B cell (primary cell): ENCODE measurements at regions of chr22 and their contacts with region 1.

Region 1: DNA sequence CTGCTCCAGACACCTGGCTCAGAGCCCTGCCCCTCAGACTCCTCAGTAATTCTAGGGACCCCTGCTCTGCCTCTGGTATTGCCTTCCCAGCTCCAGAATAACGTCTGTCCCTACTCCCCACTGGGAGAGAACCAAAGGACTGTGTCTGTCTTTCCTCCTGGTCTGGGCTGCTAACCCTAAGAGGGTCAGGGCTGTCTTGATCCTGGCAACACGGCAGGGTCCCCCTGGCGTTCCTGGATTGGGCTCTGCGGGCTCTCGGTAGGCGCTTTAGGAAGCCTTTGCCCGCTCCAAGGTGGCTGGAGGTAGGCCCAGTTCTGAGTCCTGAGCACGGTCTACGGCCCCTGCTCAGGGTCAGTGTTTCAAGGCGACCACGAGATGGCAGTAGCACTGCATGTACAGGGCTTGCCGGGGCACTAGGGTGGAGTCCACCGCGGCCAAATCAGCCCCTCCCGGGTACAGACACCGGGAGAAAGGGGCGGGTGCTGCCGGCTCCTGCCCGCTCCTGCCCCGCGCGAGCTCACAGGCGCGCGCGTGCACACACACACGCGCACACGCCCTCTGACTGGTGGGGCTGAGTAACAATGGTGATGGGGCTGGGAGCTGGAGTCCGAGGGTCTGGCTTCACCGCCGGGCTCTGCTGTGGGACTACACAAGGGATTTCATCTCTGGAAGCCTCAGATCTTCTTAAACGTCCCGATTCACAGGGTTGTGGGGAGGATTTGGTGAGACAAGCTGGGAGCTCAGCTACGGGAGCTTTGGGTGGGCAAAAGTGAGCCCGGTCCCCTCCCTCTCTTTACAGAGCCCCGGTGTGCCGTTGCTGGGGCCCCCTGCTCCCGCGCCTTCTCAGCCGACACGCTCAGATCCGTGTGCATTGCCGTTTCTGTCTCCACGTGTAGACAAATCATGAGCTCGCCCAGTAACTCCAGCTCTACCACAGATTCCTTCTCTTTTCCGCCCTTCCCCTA is 30.1 kb upstream of the HMOX1 start:
- DNase-seq: peak; percentile 92
- ATAC-seq: peak; percentile 59
- H3K4me3 ChIP-seq: peak overlapping the region; percentile 53 to 82 (median 56)
- H3K4me3 Mint-ChIP-seq: peak overlapping the region; percentile 90
- H3K27ac ChIP-seq: peak overlapping the region; percentile 92 to 95
- H3K27ac Mint-ChIP-seq: peak overlapping the region; percentile 99
- H3K4me1 ChIP-seq: peaks cover 38 to 51% of the 10 kb centered on the region in 2 donors
- H3K4me1 Mint-ChIP-seq: peaks cover 50% of the 10 kb centered on the region
- H3K27me3 ChIP-seq: no peaks in the 10 kb centered on the region
- H3K27me3 Mint-ChIP-seq: no peaks in the 10 kb centered on the region
- CTCF ChIP-seq: peak; percentile 88

Region 2: DNA sequence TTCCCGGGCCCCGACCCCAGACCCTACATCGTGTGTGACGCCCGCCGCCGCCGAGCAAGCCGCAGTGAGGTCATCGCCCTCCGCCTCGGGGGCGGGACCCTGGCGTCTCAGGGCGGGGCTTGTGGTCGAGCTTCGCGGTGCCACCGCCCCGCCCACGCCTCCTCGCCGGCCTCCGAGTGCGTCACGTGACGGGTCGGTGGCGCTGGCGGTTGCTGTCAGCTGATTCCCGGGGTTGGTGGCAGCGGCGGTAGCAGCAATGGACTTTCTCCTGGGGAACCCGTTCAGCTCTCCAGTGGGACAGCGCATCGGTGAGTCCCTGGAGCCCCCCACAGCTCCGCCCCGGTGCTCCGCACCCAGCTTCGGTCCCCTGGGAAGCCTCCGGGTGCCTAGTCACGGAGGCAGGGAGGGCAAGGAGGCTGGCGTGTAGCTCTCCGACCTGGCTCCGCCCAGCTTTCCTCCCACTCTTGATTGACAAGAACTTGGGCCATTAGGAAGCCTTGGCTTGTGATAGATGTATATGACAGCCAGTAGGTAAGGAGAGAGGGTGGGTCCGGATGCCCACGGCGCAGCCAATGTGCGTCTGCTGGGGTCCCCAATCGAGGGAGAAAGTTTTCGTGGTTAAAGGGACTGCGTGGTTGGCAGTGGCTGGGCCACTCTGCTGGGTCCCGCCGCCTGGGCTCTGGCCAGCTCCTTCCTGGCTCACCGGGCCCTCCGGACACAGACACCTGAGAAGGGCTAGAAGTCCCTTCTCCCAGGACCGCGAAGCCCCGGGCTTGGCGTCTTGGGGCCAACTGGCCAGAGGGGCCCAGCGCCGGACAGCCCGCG is 50.9 kb before region 1 on chr22 and contains the start of gene TOM1:
- CTCF ChIA-PET with region 1: interaction called, 4 read pairs
- POLR2A ChIA-PET with region 1: interaction called, 13 read pairs
- intact Hi-C with region 1: loop called (anchors 1 kb)
- DNase-seq: peak; percentile 100
- ATAC-seq: peak; percentile 90
- H3K4me3 ChIP-seq: peak within 1 kb of the TSS; percentile 61 to 94 (median 73)
- H3K4me3 Mint-ChIP-seq: peak within 1 kb of the TSS; percentile 93
- H3K27ac ChIP-seq: peak within 1 kb of the TSS; percentile 96 to 97
- H3K27ac Mint-ChIP-seq: peak within 1 kb of the TSS; percentile 98
- H3K4me1 ChIP-seq: peaks cover 5 to 22% of the 10 kb centered on the region in 2 donors
- H3K4me1 Mint-ChIP-seq: peaks cover 26% of the 10 kb centered on the region
- H3K27me3 ChIP-seq: no peaks in the 10 kb centered on the region
- H3K27me3 Mint-ChIP-seq: no peaks in the 10 kb centered on the region
- CTCF ChIP-seq: no peak
- total RNA-seq, gene TOM1: 53.2 and 54.2 TPM in 2 replicates

Region 3: GRCh38 chr22:35392357-35392756 is 41.5 kb after region 1 on chr22:
- CTCF ChIA-PET with region 1: interaction called, 17 read pairs
- POLR2A ChIA-PET with region 1: interaction called, 17 read pairs
- intact Hi-C with region 1: no loop called
- DNase-seq: peak; percentile 59
- ATAC-seq: peak; percentile 79
- H3K4me3 ChIP-seq: no peak overlapping the region
- H3K4me3 Mint-ChIP-seq: peak overlapping the region; percentile 54
- H3K27ac ChIP-seq: peak overlapping the region; percentile 34 to 48
- H3K27ac Mint-ChIP-seq: peak overlapping the region; percentile 73
- H3K4me1 ChIP-seq: peaks cover 22 to 32% of the 10 kb centered on the region in 2 donors
- H3K4me1 Mint-ChIP-seq: peaks cover 34% of the 10 kb centered on the region
- H3K27me3 ChIP-seq: no peaks in the 10 kb centered on the region
- H3K27me3 Mint-ChIP-seq: no peaks in the 10 kb centered on the region
- CTCF ChIP-seq: no peak

Region 4: DNA sequence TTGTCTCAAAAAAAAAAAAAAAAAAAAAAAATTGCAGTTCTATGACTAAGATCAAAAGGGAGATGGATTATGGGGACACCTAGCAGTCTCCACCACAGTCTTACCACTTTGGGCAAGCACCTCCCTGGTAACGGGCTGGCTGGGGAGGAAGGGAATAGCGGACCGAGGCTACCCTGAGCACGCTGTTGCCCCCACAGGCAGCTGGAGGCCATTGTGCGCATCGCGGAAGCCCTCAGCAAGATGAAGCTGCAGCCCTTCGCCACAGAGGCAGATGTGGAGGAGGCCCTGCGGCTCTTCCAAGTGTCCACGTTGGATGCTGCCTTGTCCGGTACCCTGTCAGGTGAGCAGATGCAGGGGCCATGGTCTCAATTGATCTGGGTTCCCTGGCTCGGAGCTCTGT is 70.3 kb after region 1 on chr22:
- CTCF ChIA-PET with region 1: interaction called, 311 read pairs
- POLR2A ChIA-PET with region 1: no interaction called
- intact Hi-C with region 1: no loop called
- DNase-seq: no peak
- ATAC-seq: no peak
- H3K4me3 ChIP-seq: no peak overlapping the region
- H3K4me3 Mint-ChIP-seq: no peak overlapping the region
- H3K27ac ChIP-seq: no peak overlapping the region
- H3K27ac Mint-ChIP-seq: no peak overlapping the region
- H3K4me1 ChIP-seq: no peaks in the 10 kb centered on the region
- H3K4me1 Mint-ChIP-seq: no peaks in the 10 kb centered on the region
- H3K27me3 ChIP-seq: no peaks in the 10 kb centered on the region
- H3K27me3 Mint-ChIP-seq: no peaks in the 10 kb centered on the region
- CTCF ChIP-seq: no peak

Region 5: DNA sequence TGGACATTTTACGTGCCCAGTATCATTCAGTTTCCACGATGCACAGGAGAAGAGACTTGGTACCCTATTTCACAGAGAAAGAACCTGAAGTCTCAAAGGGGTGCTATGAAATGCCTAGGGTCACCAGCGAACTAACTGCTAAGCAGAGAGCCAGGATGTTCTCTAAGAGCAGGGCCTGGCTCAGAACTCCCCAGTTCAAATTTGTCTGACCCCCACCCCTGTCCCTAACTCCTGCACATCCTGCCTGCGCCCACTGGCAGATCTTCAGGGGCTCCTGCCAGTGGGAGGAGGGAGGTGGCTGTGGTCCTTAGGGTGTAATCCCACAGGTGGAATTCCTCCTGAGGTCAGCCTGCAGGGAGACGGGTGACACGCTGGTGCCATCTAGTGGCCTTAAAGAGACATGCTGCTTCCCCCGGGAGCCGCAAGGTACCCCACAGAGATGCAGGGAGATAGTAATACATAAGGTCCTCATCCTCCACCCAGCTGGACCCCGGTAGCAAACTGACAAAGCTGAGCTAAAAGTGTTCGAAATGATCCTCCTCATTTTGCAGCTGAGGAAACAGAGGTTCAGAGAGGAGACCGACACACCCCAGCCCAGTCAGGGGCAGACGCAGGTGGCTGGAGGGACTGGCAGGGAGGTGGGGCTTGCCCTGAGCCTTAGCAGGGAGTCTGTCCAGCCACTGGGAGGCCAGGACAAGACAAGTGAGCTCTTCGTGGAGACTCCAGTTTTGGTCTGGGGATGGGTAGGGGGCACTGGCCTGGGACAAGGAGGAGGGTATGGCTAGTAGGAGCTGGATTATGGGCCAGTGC is 232.2 kb after region 1 on chr22:
- CTCF ChIA-PET with region 1: interaction called, 136 read pairs
- POLR2A ChIA-PET with region 1: no interaction called
- intact Hi-C with region 1: no loop called
- DNase-seq: peak; percentile 81
- ATAC-seq: peak; percentile 77
- H3K4me3 ChIP-seq: no peak overlapping the region
- H3K4me3 Mint-ChIP-seq: no peak overlapping the region
- H3K27ac ChIP-seq: no peak overlapping the region
- H3K27ac Mint-ChIP-seq: no peak overlapping the region
- H3K4me1 ChIP-seq: peaks cover 0 to 7% of the 10 kb centered on the region in 2 donors
- H3K4me1 Mint-ChIP-seq: no peaks in the 10 kb centered on the region
- H3K27me3 ChIP-seq: no peaks in the 10 kb centered on the region
- H3K27me3 Mint-ChIP-seq: no peaks in the 10 kb centered on the region
- CTCF ChIP-seq: peak; percentile 95

Region 6: DNA sequence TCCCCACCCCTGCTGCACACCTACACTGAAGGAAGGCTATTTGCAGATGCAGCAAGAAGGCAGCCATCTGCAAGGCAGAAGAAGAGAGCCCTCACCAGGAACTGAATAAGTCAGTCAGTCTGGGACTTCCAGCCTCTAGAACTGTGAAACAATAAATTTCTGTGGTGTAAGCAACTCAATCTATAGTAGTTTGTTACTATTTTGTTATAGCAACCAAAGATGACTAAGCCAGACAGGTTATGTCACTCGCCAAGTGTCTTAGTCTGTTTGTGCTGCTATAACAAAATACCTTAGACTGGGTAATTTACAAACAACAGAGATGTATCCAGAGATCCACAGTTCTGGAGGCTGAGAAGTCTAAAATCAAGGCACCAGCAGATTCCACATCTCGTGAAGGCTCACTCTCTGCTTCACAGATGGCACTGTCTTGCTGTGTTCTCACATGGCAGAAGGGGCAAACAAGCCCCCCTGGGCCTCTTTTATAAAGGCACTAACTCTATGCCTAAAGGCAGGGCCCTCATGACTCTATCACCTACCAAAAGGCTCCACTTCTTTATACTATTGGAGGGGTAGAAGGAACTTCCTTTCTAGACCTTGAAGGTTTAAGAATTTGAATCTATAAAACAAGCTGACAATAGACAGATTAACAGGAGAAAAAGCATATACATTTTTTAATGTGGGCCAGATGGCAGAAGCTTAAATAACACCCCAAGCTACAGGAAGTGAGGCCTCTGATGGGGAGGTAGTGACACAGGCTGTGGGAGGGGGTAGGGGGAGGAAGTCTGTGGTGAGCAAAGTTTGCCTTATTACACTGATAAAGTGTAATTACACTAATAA is 309.7 kb after region 1 on chr22:
- CTCF ChIA-PET with region 1: no interaction called
- POLR2A ChIA-PET with region 1: no interaction called
- intact Hi-C with region 1: no loop called
- DNase-seq: peak; percentile 44
- ATAC-seq: peak; percentile 78
- H3K4me3 ChIP-seq: peak overlapping the region in 1 of 5 experiments; percentile 20
- H3K4me3 Mint-ChIP-seq: peak overlapping the region; percentile 21
- H3K27ac ChIP-seq: peak overlapping the region; percentile 78 to 83
- H3K27ac Mint-ChIP-seq: peak overlapping the region; percentile 70
- H3K4me1 ChIP-seq: peaks cover 18 to 23% of the 10 kb centered on the region in 2 donors
- H3K4me1 Mint-ChIP-seq: peaks cover 32% of the 10 kb centered on the region
- H3K27me3 ChIP-seq: no peaks in the 10 kb centered on the region
- H3K27me3 Mint-ChIP-seq: no peaks in the 10 kb centered on the region
- CTCF ChIP-seq: no peak

Region 7: GRCh38 chr22:36156515-36157419 is 805.9 kb after region 1 on chr22:
- CTCF ChIA-PET with region 1: no interaction called
- POLR2A ChIA-PET with region 1: no interaction called
- intact Hi-C with region 1: loop called (anchors 5 kb)
- DNase-seq: peak; percentile 69
- ATAC-seq: peak; percentile 59
- H3K4me3 ChIP-seq: peak overlapping the region; percentile 42 to 60 (median 55)
- H3K4me3 Mint-ChIP-seq: peak overlapping the region; percentile 94
- H3K27ac ChIP-seq: peak overlapping the region; percentile 72 to 92
- H3K27ac Mint-ChIP-seq: peak overlapping the region; percentile 93
- H3K4me1 ChIP-seq: peaks cover 53 to 69% of the 10 kb centered on the region in 2 donors
- H3K4me1 Mint-ChIP-seq: peaks cover 78% of the 10 kb centered on the region
- H3K27me3 ChIP-seq: no peaks in the 10 kb centered on the region
- H3K27me3 Mint-ChIP-seq: no peaks in the 10 kb centered on the region
- CTCF ChIP-seq: no peak